ENCODE measurements at regions of chr16 and their contacts with region 1.

Region 1: GRCh38 chr16:87778830-87779579 is 13.2 kb upstream of the KLHDC4 start:
- DNase-seq: peak; percentile 96
- ATAC-seq: peak; percentile 96
- H3K4me3 ChIP-seq: no peak overlapping the region
- H3K27ac ChIP-seq: peak overlapping the region; percentile 47
- H3K4me1 ChIP-seq: peaks cover 22% of the 10 kb centered on the region
- H3K27me3 ChIP-seq: no peaks in the 10 kb centered on the region
- CTCF ChIP-seq: peak; percentile 98

Region 2: DNA sequence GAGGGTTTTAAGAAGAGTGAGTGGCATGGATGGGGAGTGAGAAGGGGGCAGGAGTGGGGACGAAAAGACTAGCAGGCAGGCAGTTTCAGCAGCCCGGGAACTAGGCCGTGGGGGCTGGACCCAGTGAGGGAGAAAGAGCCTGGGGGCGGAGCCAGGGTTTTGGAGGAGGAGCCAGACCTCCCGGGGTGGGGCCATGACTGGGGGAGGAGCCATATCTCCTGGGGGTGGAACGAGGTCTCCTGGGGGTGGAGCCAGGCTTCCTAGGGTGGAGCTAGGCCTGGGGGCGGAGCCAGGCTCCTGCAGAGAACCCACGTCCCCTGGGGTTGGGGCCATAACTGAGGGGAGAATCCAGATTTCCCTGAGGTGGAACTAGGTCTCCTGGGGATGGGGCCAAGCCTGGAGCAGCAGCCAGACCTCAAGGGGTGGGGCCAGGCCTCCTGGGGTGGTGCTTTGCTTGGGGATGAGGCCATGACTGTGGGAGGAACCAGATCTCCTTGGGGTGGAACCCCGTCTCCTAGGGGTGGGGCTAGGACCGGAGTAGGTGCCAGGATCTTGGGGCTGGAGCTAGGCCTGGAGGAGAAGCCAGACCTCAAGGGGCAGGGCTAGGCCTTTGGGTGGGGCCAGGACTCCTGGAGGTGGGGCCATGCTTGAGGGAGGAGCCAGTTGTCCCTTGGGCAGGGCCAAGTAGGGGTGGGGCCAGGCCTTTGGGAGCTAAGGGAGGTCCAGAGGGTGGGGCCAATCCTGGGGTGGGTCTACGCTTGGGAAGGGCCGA is 218.4 kb before region 1 on chr16:
- intact Hi-C with region 1: no loop called
- DNase-seq: peak; percentile 69
- ATAC-seq: peak; percentile 62
- H3K4me3 ChIP-seq: no peak overlapping the region
- H3K27ac ChIP-seq: no peak overlapping the region
- H3K4me1 ChIP-seq: no peaks in the 10 kb centered on the region
- H3K27me3 ChIP-seq: no peaks in the 10 kb centered on the region
- CTCF ChIP-seq: no peak

Region 3: GRCh38 chr16:87853411-87854052 is 74.5 kb after region 1 on chr16:
- intact Hi-C with region 1: no loop called
- DNase-seq: peak; percentile 97
- ATAC-seq: peak; percentile 89
- H3K4me3 ChIP-seq: peak overlapping the region; percentile 33
- H3K27ac ChIP-seq: peak overlapping the region; percentile 71
- H3K4me1 ChIP-seq: peaks cover 31% of the 10 kb centered on the region
- H3K27me3 ChIP-seq: no peaks in the 10 kb centered on the region
- CTCF ChIP-seq: no peak

Region 4: GRCh38 chr16:87874639-87875465 is 95.8 kb after region 1 on chr16:
- intact Hi-C with region 1: loop called (anchors 5 kb)
- DNase-seq: no peak
- ATAC-seq: no peak
- H3K4me3 ChIP-seq: no peak overlapping the region
- H3K27ac ChIP-seq: no peak overlapping the region
- H3K4me1 ChIP-seq: peaks cover 10% of the 10 kb centered on the region
- H3K27me3 ChIP-seq: peaks cover 12% of the 10 kb centered on the region
- CTCF ChIP-seq: no peak